ENCODE measurements at regions of chr15 and their contacts with region 1.

Region 1: GRCh38 chr15:99452774-99453636 is 112.8 kb upstream of the MEF2A start:
- DNase-seq: peak; percentile 87 to 96
- H3K4me3 ChIP-seq: peak overlapping the region in 1 of 2 donors; percentile 50
- H3K27ac ChIP-seq: peak overlapping the region; percentile 95 to 96
- H3K4me1 ChIP-seq: peaks cover 21 to 36% of the 10 kb centered on the region in 2 donors
- H3K27me3 ChIP-seq: no peaks in the 10 kb centered on the region
- CTCF ChIP-seq: no peak

Region 2: GRCh38 chr15:99442252-99442897 is 10.6 kb before region 1 on chr15:
- intact Hi-C with region 1: loop called (anchors 1 kb)
- DNase-seq: peak in 1 of 2 donors; percentile 91
- H3K4me3 ChIP-seq: peak overlapping the region in 1 of 2 donors; percentile 37
- H3K27ac ChIP-seq: peak overlapping the region; percentile 85 to 93
- H3K4me1 ChIP-seq: peaks cover 16 to 37% of the 10 kb centered on the region in 2 donors
- H3K27me3 ChIP-seq: no peaks in the 10 kb centered on the region
- CTCF ChIP-seq: no peak

Region 3: GRCh38 chr15:99476413-99477222 is 23.6 kb after region 1 on chr15:
- intact Hi-C with region 1: loop called (anchors 1 kb)
- DNase-seq: peak; percentile 64 to 94
- H3K4me3 ChIP-seq: no peak overlapping the region
- H3K27ac ChIP-seq: peak overlapping the region; percentile 86 to 88
- H3K4me1 ChIP-seq: peaks cover 16 to 22% of the 10 kb centered on the region in 2 donors
- H3K27me3 ChIP-seq: no peaks in the 10 kb centered on the region
- CTCF ChIP-seq: no peak

Region 4: DNA sequence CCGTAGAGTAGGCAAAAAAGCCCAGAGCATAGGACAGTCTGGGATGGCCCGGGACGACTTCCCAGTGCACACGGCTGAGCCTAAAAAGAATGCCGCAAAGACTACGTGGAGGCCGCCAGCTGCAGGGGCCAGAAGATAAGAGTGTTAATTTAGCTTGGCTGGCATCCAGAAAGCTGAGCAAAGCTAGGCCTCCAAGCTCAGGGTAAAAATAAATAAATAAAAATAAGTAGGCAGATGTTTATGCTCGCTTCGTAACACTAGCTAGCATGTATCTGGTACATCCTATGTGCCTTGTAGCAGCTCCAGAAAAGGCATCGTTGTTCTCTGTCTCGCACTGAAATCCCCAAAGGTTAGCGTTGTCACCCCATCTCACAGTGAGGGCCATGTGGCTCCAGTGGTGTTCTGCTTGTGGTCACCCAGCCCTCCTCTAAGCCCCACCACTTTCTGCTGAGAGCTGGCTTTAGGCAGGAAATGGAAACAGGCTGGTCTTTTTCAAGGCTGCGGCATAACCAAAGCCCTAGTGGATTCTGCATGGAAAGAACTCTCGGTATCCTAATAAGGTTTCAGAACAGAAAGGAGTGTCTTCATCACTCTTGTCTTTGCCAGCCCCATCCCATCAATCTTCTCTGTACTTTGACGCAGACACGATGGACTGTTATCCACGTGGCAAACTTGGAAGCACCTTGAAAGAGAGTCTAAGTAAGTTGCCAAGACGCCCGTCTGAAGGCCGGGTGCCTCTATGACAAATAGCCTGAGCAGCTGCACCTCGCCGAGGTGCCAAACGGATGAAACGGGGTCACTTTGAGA is 54.7 kb after region 1 on chr15:
- intact Hi-C with region 1: loop called (anchors 5 kb)
- DNase-seq: peak in 1 of 2 donors; percentile 87
- H3K4me3 ChIP-seq: peak overlapping the region; percentile 22 to 50
- H3K27ac ChIP-seq: peak overlapping the region; percentile 82 to 84
- H3K4me1 ChIP-seq: peaks cover 5 to 32% of the 10 kb centered on the region in 2 donors
- H3K27me3 ChIP-seq: no peaks in the 10 kb centered on the region
- CTCF ChIP-seq: no peak

Measured in ascending aorta (tissue), 2 donors.